ENCODE measurements at regions of chr14 and their contacts with region 1.

Region 1: DNA sequence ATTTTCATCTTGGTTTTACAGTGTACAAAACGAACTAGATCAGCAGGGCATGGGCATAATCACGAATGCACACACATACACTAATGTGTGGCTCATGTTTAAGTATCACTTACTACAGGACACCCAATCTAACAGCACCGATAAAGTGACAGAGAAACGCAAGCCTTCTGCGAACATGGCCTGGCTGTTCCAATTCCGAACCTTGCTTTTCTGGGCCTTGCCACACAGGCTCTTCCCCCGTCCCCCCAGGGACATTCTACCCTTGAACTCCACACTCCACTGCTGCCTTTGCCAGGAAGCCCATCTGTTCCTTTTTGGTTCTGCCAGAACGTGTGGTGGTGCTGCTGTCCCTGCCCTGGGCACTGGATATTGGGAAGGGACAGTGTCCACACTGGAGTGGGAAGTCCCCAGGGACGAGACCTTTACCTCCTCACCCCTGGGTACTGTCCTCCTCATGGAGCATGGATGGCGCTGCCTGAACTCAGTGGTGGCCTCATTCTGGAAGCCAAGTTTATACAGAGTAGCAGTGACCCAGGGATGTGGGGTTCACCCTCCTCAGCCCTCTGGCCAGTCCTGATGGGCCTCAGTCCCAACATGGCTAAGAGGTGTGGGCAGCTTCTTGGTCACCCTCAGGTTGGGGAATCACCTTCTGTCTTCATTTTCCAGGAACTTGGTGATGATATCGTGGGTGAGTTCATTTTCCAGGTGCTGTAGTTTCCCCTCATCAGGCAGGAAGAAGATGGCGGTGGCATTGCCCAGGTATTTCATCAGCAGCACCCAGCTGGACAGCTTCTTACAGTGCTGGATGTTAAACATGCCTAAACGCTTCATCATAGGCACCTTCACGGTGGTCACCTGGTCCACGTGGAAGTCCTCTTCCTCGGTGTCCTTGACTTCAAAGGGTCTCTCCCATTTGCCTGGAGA is 7.9 kb downstream of the SERPINA1 start:
- DNase-seq: no peak
- H3K4me3 ChIP-seq: no peak overlapping the region
- H3K27ac ChIP-seq: no peak overlapping the region
- H3K4me1 ChIP-seq: no peaks in the 10 kb centered on the region
- H3K27me3 ChIP-seq: no peaks in the 10 kb centered on the region
- CTCF ChIP-seq: no peak

Region 2: GRCh38 chr14:94364037-94364436 is 16.4 kb before region 1 on chr14:
- CTCF ChIA-PET with region 1: no interaction called
- dilution Hi-C with region 1: no loop called
- in situ Hi-C with region 1: no loop called
- intact Hi-C with region 1: loop called (anchors 1 kb)
- DNase-seq: no peak
- H3K4me3 ChIP-seq: no peak overlapping the region
- H3K27ac ChIP-seq: no peak overlapping the region
- H3K4me1 ChIP-seq: peaks cover 3% of the 10 kb centered on the region
- H3K27me3 ChIP-seq: no peaks in the 10 kb centered on the region
- CTCF ChIP-seq: no peak

Region 3: GRCh38 chr14:94584591-94585280 is 204.2 kb after region 1 on chr14:
- CTCF ChIA-PET with region 1: no interaction called
- dilution Hi-C with region 1: no loop called
- in situ Hi-C with region 1: no loop called
- intact Hi-C with region 1: no loop called
- DNase-seq: no peak
- H3K4me3 ChIP-seq: no peak overlapping the region
- H3K27ac ChIP-seq: no peak overlapping the region
- H3K4me1 ChIP-seq: no peaks in the 10 kb centered on the region
- H3K27me3 ChIP-seq: no peaks in the 10 kb centered on the region
- CTCF ChIP-seq: no peak